ENCODE measurements at regions of chr3 and their contacts with region 1.

Region 1: DNA sequence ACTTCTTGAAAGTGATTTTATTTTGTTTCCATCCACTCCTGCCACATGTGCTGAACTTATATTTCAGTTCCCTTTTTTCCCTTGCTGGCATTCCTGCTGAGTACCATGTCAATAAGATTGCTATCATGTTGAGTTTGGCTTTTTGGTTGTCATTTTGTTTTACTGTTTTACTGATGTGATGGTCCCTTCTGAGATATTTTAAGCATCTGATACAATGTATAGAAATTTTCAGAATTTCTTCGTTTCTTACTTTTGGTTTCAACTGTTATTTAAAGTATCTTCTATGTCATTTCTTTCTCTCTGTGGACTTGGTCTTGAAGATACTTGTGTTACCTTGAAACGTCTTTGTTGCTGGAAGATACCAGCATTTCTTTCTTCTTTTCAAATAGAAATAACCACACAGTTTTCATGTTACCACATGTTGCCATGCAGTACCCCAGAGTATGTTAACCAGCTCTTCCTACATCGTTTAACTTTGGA is 14.1 kb downstream of the SIDT1 start:
- DNase-seq: peak; percentile 57
- ATAC-seq: peak; percentile 88
- H3K4me3 ChIP-seq: peak overlapping the region; percentile 52; the same call in 1 of the 2 replicates
- H3K27ac ChIP-seq: peak overlapping the region; percentile 76
- H3K4me1 ChIP-seq: peaks cover 26% of the 10 kb centered on the region
- H3K27me3 ChIP-seq: no peaks in the 10 kb centered on the region
- CTCF ChIP-seq: no peak
- EP300 ChIP-seq: 0 out of 4 replicates have a peak, but pooled peaks of 1 of the 2 experiments have one; percentile 39
- POLR2A ChIP-seq: no peak
- RAD21 ChIP-seq: no peak

Region 2: GRCh38 chr3:113560831-113561623 is 14.6 kb after region 1 on chr3:
- CTCF ChIA-PET with region 1: interaction called, 8 read pairs
- POLR2A ChIA-PET with region 1: interaction called, 3 read pairs
- RAD21 ChIA-PET with region 1: interaction called, 4 read pairs
- SMC1A ChIA-PET with region 1: interaction called, 15 read pairs
- in situ Hi-C with region 1: no loop called
- intact Hi-C with region 1: no loop called
- DNase-seq: no peak
- ATAC-seq: no peak
- H3K4me3 ChIP-seq: no peak overlapping the region
- H3K27ac ChIP-seq: no peak overlapping the region
- H3K4me1 ChIP-seq: no peaks in the 10 kb centered on the region; the same call in 1 of the 2 replicates
- H3K27me3 ChIP-seq: no peaks in the 10 kb centered on the region
- CTCF ChIP-seq: no peak
- EP300 ChIP-seq: no peak
- POLR2A ChIP-seq: no peak
- RAD21 ChIP-seq: no peak